Activated CD4-positive, alpha-beta T cell treated with anti-CD3 and anti-CD28 coated beads, Interleukin-2, amount 10 ng/mL, durations not matched to agents 24 days and 14 days (primary cell): ENCODE measurements at regions of chr7 and their contacts with region 1.

Region 1: DNA sequence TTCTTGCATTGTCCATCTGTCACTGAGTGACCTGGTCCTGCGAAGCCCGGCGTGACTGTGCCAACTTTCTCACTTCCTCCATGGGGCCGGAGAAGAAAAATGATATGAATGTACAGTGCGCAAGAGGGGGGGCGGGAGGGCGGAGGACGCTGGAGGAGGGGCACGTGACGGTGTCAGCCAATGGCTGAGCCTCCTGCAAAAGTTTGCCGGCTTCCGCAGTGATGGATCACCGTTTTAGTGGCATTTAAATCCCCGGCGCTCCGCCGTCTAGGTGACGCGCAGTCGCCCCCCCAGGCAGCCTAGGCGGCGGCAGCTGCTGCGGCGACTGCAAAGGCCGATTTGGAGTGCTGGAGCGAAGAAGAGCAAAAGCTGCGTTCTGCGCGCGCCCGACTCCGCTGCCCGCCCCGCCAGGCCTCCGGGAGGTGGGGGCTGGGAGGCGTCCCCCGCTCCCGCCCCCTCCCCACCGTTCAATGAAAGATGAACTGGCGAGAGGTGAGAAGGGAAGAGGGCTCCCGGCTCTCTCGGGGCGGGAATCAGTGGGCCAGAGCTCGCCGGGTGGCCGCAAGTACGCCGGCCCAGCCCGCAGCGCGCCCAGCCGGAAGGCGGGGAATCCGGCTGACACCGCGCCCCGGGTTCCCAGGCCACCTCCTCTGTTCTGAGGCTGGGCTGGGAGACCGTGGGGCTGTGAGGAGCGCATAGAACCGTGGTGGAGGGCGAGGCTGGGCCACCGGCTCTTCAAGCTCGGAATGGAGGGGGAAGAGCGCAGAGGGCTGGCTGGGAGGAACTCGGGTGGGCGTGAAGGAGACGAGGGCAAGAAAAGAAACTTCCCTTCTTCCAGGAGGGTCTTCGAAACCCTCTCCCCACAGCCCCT is at the start of gene HOXA1:
- DNase-seq: peak; percentile 88
- H3K4me3 Mint-ChIP-seq: peak within 1 kb of the TSS; percentile 85
- H3K27ac Mint-ChIP-seq: peak within 1 kb of the TSS; percentile 62
- H3K4me1 Mint-ChIP-seq: peaks cover 17% of the 10 kb centered on the region
- H3K27me3 Mint-ChIP-seq: peaks cover 90% of the 10 kb centered on the region
- total RNA-seq, gene HOXA1: 0.09 and 0.16 TPM in 2 replicates

Region 2: GRCh38 chr7:26864309-26865093 is 231.6 kb before region 1 on chr7 and contains the start of gene SKAP2:
- intact Hi-C with region 1: loop called (anchors 5 kb)
- DNase-seq: peak; percentile 96
- H3K4me3 Mint-ChIP-seq: peak within 1 kb of the TSS; percentile 93
- H3K27ac Mint-ChIP-seq: peak within 1 kb of the TSS; percentile 73
- H3K4me1 Mint-ChIP-seq: peaks cover 16% of the 10 kb centered on the region
- H3K27me3 Mint-ChIP-seq: peaks cover 39% of the 10 kb centered on the region
- total RNA-seq, gene SKAP2: 3.6 and 4.6 TPM in 2 replicates

Region 3: GRCh38 chr7:27130540-27131389 is 34.6 kb after region 1 on chr7 and contains the start of gene HOXA4:
- intact Hi-C with region 1: loop called (anchors 5 kb)
- DNase-seq: peak; percentile 91
- H3K4me3 Mint-ChIP-seq: peak within 1 kb of the TSS; percentile 66
- H3K27ac Mint-ChIP-seq: no peak within 1 kb of the TSS
- H3K4me1 Mint-ChIP-seq: peaks cover 14% of the 10 kb centered on the region
- H3K27me3 Mint-ChIP-seq: peaks cover 53% of the 10 kb centered on the region
- total RNA-seq, gene HOXA4: not detected in 2 replicates

Region 4: DNA sequence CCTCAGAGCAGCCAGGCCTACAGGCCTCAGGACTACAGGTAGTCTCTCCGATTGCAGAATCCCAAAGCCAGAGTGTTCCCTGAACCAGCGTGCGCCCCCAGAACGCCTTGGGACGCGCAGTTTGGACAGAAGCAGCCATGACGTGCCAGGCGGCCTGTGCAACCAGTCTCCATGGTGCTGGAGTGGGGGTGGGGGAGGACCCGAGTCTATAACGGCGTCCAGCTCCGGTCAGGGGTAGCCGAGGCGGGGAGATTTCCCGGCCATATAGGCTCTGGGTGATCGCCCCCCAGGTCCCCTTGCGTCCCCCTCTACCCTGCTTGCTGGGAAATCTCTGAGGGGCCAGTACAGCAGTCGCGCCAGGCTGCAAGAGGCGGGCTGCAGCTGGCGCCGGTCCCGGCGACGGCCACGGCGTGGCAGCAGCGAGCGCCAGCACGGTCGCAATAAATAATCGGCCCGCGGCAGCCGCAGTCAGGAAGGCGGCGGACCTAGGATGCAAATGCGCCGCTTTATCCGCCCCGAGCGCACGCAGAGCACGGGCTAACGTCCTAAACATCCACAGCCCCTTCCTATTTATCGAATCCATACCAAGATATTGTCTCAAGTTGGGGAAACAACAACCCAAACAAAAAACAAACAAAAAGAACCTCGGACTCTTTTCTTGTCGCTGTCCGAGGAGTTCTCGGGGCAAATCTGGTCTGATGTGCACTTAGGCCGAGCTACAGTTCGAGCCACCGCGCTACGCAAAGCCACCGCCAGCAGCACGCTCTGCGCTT is 54.6 kb after region 1 on chr7:
- intact Hi-C with region 1: loop called (anchors 2 kb)
- DNase-seq: peak; percentile 88
- H3K4me3 Mint-ChIP-seq: peak overlapping the region; percentile 69
- H3K27ac Mint-ChIP-seq: no peak overlapping the region
- H3K4me1 Mint-ChIP-seq: peaks cover 15% of the 10 kb centered on the region
- H3K27me3 Mint-ChIP-seq: peaks cover 85% of the 10 kb centered on the region

Region 5: DNA sequence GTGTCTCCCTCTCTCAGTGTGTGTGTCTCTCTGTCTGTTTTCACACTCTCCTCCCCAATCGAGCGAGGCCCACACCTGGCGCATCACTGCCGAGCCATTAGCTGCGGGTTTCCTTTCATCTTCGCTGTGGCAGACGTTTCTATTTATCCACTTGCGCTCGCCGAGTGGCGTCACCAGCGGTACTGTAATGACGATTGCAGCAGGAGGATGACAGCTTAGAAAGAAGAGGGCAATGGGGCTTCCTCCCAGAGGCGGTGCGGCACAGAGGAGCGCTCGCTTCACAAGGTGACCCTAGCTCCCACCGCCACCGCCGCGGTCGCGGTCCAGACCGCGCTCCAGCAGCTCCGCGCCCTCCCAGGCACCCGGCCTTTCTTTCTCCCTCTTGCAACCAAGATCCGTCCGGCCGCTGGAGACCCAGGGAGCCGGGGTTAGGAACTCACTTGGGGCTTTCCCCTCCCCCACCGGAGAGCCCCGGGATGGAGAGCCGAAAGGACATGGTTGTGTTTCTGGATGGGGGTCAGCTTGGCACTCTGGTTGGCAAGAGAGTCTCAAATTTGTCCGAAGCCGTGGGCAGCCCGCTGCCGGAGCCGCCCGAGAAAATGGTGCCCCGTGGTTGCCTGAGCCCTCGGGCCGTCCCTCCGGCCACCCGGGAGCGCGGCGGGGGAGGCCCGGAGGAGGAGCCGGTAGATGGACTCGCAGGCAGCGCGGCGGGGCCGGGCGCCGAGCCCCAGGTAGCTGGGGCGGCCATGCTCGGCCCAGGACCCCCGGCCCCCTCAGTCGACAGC is 146.6 kb after region 1 on chr7 and contains the start of gene EVX1:
- intact Hi-C with region 1: loop called (anchors 5 kb)
- DNase-seq: no peak
- H3K4me3 Mint-ChIP-seq: no peak within 1 kb of the TSS
- H3K27ac Mint-ChIP-seq: peak within 1 kb of the TSS; percentile 16
- H3K4me1 Mint-ChIP-seq: no peaks in the 10 kb centered on the region
- H3K27me3 Mint-ChIP-seq: peaks cover 83% of the 10 kb centered on the region
- total RNA-seq, gene EVX1: not detected in 2 replicates

Region 6: GRCh38 chr7:27254625-27255024 is 158.5 kb after region 1 on chr7:
- intact Hi-C with region 1: no loop called
- DNase-seq: no peak
- H3K4me3 Mint-ChIP-seq: no peak overlapping the region
- H3K27ac Mint-ChIP-seq: no peak overlapping the region
- H3K4me1 Mint-ChIP-seq: peaks cover 3% of the 10 kb centered on the region
- H3K27me3 Mint-ChIP-seq: peaks cover 45% of the 10 kb centered on the region